ENCODE measurements at regions of chr2 and their contacts with region 1.

Region 1: DNA sequence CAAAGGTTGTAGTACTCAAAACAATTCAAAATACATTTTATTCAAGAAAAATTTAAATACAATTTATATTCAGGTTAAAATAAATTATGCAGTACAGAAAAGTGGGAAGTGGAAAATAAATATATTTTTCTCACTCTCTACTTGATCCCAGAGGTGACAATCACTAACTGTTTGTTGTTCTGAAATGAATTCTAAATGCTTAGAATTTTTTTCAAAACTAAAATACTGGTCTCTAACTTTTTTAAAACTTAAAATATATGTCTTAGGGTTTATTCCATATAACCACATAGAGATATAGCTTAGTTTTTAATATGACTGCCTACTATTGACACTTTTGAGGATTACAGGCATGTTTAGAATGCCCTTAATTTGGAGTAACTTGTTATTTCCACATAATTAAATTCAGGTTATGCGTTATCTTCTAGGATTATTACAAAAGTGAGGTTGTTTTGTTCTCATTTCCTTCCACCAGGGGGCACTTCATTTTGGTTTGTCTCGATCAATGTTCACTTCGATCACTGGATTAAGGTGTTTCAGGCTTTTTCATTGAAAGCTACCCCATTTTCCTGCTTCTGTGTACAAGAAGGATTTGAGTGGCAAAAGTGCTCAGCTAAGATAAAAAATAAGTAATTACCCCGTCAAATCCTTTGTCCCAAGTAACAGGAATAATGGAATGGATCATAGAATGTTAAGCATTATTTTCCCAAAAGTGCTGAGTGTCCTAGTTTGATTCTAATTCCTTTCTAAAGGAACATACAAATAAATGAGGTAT is 27.1 kb upstream of the TFPI start:
- DNase-seq: peak in 5 of 9 donors; percentile 6 to 37 (median 18)
- ATAC-seq: no peak
- H3K4me3 ChIP-seq: no peak overlapping the region
- H3K4me3 Mint-ChIP-seq: no peak overlapping the region
- H3K27ac ChIP-seq: no peak overlapping the region
- H3K27ac Mint-ChIP-seq: no peak overlapping the region
- H3K4me1 ChIP-seq: no peaks in the 10 kb centered on the region
- H3K4me1 Mint-ChIP-seq: peaks cover 0 to 8% (median 7%) of the 10 kb centered on the region in 7 donors
- H3K27me3 ChIP-seq: no peaks in the 10 kb centered on the region
- H3K27me3 Mint-ChIP-seq: peaks cover 0 to 5% (median 0%) of the 10 kb centered on the region in 5 donors

Region 2: GRCh38 chr2:187509667-187510417 is 71.5 kb before region 1 on chr2:
- CTCF ChIA-PET with region 1: no interaction called
- POLR2A ChIA-PET with region 1: no interaction called
- intact Hi-C with region 1: no loop called
- DNase-seq: peak in 5 of 9 donors; percentile 0 to 36 (median 17)
- ATAC-seq: peak; percentile 79
- H3K4me3 ChIP-seq: no peak overlapping the region
- H3K4me3 Mint-ChIP-seq: peak overlapping the region in 4 of 10 donors; percentile 12 to 58 (median 42)
- H3K27ac ChIP-seq: no peak overlapping the region
- H3K27ac Mint-ChIP-seq: peak overlapping the region in 4 of 9 donors; percentile 21 to 89 (median 56)
- H3K4me1 ChIP-seq: no peaks in the 10 kb centered on the region
- H3K4me1 Mint-ChIP-seq: peaks cover 0 to 14% (median 8%) of the 10 kb centered on the region in 7 donors
- H3K27me3 ChIP-seq: no peaks in the 10 kb centered on the region
- H3K27me3 Mint-ChIP-seq: peaks cover 3 to 19% (median 11%) of the 10 kb centered on the region in 5 donors

Region 3: DNA sequence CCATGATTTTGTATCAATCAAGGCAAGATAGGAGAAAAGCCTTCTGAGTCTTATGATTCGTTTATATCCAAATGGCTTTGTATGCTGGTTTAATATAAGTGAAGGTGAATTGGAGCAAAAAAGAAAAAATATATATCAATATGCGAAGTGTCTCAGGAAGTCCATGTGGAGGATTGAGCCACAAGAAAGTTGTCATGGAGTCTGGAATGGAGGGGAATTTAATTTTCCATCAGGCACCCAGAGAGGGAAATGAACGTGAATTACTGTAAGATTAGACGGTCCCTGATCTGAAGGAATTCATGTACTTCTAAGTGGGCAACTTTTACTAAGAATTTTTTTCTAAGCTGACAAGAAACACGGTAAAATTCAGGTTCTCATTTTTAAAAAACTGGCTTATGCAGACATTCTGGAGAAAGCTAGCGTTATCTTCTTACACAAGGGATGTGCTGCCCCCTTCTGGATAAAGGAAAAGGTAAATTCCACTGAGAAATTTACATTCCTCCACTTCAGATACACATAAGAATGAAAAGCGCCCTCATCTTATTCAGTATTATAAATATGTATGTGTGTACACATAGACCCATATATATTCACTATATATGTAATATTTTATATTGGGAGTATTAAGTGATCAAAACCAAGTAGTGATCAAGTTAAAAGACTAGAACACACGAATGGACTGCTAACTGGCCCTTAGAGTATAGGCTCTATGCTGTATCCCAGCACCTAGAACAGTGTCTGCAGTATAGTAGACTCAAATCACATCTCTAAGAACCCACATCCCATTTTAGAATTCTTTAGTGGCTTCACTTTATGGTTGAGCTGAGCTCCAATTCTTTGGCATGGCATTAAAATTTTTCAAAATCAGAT is 261.9 kb after region 1 on chr2:
- CTCF ChIA-PET with region 1: no interaction called
- POLR2A ChIA-PET with region 1: no interaction called
- intact Hi-C with region 1: loop called in 1 of 2 experiments (anchors 1 kb)
- DNase-seq: no peak
- ATAC-seq: no peak
- H3K4me3 ChIP-seq: no peak overlapping the region
- H3K4me3 Mint-ChIP-seq: no peak overlapping the region
- H3K27ac ChIP-seq: no peak overlapping the region
- H3K27ac Mint-ChIP-seq: no peak overlapping the region
- H3K4me1 ChIP-seq: no peaks in the 10 kb centered on the region
- H3K4me1 Mint-ChIP-seq: no peaks in the 10 kb centered on the region
- H3K27me3 ChIP-seq: no peaks in the 10 kb centered on the region
- H3K27me3 Mint-ChIP-seq: peaks cover 0 to 3% (median 0%) of the 10 kb centered on the region in 5 donors

Region 4: GRCh38 chr2:188512456-188512855 is 931.1 kb after region 1 on chr2:
- CTCF ChIA-PET with region 1: no interaction called
- POLR2A ChIA-PET with region 1: no interaction called
- intact Hi-C with region 1: loop called (anchors 2 kb)
- DNase-seq: no peak
- ATAC-seq: no peak
- H3K4me3 ChIP-seq: no peak overlapping the region
- H3K4me3 Mint-ChIP-seq: no peak overlapping the region
- H3K27ac ChIP-seq: no peak overlapping the region
- H3K27ac Mint-ChIP-seq: no peak overlapping the region
- H3K4me1 ChIP-seq: no peaks in the 10 kb centered on the region
- H3K4me1 Mint-ChIP-seq: no peaks in the 10 kb centered on the region
- H3K27me3 ChIP-seq: no peaks in the 10 kb centered on the region
- H3K27me3 Mint-ChIP-seq: peaks cover 0 to 10% (median 8%) of the 10 kb centered on the region in 5 donors